Body of pancreas (tissue), 4 donors: ENCODE measurements at regions of chr1 and their contacts with region 1.

Region 1: DNA sequence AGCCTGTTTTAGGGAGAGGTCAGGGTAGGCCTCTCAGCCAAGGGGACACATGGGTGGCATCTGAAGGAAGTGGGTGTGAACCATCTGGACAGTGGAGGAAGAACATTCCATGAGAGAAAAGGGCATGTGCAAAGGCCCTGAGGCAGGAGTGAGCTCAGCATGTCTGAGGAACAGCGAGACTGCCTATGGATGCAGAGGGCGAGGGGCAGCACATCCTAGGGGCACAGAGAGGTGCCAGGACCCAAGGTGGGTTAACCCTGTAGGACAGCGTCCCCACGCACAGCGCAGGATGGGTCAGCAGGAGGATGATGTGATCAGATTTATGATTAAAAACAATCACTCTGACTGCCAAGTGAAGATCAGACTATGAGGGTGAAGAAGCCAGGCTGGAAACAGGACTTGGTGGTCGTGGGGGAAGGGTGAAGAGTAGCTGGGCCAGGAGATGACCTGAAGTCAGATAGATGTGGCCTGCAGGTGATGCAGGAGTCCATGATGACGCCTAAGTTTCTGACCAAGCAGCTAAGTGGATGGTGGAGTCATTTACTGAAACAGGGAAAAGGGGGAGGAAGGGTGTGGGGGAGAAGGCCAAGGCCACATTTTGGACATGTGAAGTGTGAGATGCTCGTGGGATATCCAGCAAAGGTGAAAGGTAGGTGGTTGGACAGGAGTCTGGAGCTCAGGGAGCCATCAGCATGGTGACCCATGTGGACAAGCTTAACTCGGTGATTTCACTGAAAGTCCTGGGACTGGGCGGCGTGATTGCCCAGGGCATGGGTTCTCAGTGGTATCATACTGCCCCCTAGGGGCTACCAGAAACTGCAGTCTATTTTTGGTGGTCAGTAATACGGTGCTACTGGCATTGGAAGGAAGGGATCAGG is 37.8 kb downstream of the PABPC4 start:
- DNase-seq: peak; percentile 63 to 79 (median 76)
- ATAC-seq: peak; percentile 90
- H3K4me3 ChIP-seq: no peak overlapping the region
- H3K27ac ChIP-seq: no peak overlapping the region
- H3K4me1 ChIP-seq: no peaks in the 10 kb centered on the region
- H3K27me3 ChIP-seq: no peaks in the 10 kb centered on the region
- CTCF ChIP-seq: peak; percentile 82 to 87 (median 84)
- POLR2A ChIP-seq: no peak

Region 2: DNA sequence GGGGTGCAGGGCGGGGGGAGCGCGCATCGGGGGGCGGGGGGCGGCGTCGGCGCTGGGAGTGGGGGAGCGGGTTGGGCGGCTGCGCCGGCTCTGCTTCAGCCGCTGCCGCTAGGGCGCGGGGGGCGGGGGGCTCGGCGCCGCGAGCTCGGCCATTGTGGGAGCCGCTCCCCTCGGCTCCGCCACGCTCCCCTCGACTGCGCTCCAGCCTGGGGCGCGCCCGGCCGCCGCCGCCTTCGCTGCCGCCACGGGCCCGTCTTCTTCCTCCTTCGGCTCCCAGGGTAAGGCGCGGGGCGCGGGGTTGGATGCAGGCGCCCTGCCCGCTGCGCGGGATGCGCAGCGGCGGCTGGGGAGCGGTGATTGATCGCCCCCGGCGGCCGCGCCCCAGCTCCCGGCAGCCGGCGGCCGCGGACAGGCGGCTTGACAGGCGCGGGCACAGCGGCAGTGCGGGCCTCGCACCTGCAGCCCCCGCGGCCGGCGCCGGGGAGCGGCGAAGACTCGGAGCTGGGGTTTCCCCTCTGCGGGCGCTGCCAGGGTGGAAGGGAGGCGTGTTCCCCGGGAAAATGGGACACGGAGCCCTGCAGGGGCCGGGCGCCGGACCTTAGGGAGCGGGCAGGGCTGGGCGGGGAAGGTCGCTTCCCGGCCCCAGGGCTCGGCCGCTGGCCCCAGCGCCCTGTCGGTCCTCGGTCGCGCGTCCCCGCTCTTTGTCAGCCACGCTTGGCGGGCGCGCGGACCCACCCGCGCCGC is 457.4 kb before region 1 on chr1:
- intact Hi-C with region 1: loop called (anchors 10 kb)
- DNase-seq: peak in 2 of 4 donors; percentile 16 to 24
- ATAC-seq: peak; percentile 55
- H3K4me3 ChIP-seq: peak overlapping the region in 1 of 2 donors; percentile 10
- H3K27ac ChIP-seq: no peak overlapping the region
- H3K4me1 ChIP-seq: peaks cover 13% of the 10 kb centered on the region
- H3K27me3 ChIP-seq: peaks cover 0 to 8% of the 10 kb centered on the region in 2 donors
- CTCF ChIP-seq: peak in 1 of 7 experiments; percentile 7
- POLR2A ChIP-seq: no peak

Region 3: GRCh38 chr1:39588101-39588500 is 49.3 kb after region 1 on chr1:
- intact Hi-C with region 1: no loop called
- DNase-seq: no peak
- ATAC-seq: no peak
- H3K4me3 ChIP-seq: no peak overlapping the region
- H3K27ac ChIP-seq: no peak overlapping the region
- H3K4me1 ChIP-seq: no peaks in the 10 kb centered on the region
- H3K27me3 ChIP-seq: no peaks in the 10 kb centered on the region
- CTCF ChIP-seq: no peak
- POLR2A ChIP-seq: no peak